SK-N-SH (cell line): ENCODE measurements at regions of chr2 and their contacts with region 1.

Region 1: GRCh38 chr2:196453613-196454047 is 185.9 kb upstream of the CCDC150 start:
- DNase-seq: peak; percentile 34
- H3K4me3 ChIP-seq: no peak overlapping the region
- H3K27ac ChIP-seq: no peak overlapping the region
- H3K4me1 ChIP-seq: no peaks in the 10 kb centered on the region
- H3K27me3 ChIP-seq: no peaks in the 10 kb centered on the region
- CTCF ChIP-seq: peak; percentile 70
- EP300 ChIP-seq: no peak
- RAD21 ChIP-seq: peak; percentile 78

Region 2: DNA sequence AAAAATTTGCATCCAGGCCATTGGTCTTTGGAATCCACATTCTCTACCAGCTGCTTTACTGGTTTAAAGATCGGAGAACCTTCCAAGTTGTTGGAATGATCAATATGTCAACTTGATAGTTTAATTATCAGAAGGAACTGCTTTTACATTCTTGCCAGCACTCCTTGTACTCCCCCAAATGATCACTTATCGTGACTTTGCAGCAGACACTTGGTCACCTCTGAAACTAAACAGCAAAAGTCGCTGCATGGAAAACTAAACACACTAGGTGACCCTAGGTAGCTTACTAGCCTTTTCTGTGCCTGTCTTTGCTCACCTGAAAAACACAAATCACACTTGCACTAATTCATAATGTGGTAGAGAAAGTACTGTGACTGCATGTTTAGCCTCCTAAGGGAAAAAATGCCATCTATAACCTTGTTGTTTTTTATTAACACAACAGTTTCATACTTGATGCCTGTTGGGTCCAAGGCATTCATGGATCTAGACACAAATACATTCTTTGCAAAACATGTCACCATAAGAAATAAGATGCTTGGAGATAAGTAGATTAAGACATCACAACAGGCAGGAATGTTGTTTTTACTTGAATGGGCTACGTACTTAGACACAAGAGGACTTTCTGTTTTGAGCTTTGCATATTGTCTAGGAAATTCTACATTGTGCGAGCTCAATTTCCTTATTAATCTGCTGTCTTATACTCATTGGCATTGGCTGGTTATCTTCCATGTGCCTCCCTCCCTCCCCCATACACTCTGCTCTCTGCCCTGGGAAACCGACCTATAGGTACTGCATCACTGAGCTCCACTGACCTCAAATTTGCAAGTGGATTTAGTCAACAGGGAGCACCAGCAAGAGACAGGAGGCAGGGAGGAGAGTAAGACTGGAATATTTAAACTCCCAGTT is 63.1 kb before region 1 on chr2:
- CTCF ChIA-PET with region 1: no interaction called
- POLR2A ChIA-PET with region 1: no interaction called
- DNase-seq: no peak
- H3K4me3 ChIP-seq: no peak overlapping the region
- H3K27ac ChIP-seq: peak overlapping the region in 1 of 2 experiments; percentile 15; a peak in 1 of 4 replicates
- H3K4me1 ChIP-seq: no peaks in the 10 kb centered on the region
- H3K27me3 ChIP-seq: no peaks in the 10 kb centered on the region
- CTCF ChIP-seq: no peak
- EP300 ChIP-seq: no peak
- RAD21 ChIP-seq: no peak

Region 3: GRCh38 chr2:196435189-196435588 is 18.4 kb before region 1 on chr2:
- CTCF ChIA-PET with region 1: interaction called, 12 read pairs
- POLR2A ChIA-PET with region 1: no interaction called
- DNase-seq: no peak
- H3K4me3 ChIP-seq: no peak overlapping the region
- H3K27ac ChIP-seq: no peak overlapping the region
- H3K4me1 ChIP-seq: peaks cover 0 to 4% of the 10 kb centered on the region in 2 experiments; a peak in 1 of 4 replicates
- H3K27me3 ChIP-seq: no peaks in the 10 kb centered on the region
- CTCF ChIP-seq: no peak
- EP300 ChIP-seq: no peak
- RAD21 ChIP-seq: no peak

Region 4: GRCh38 chr2:196464311-196464710 is 10.7 kb after region 1 on chr2:
- CTCF ChIA-PET with region 1: interaction called, 15 read pairs
- POLR2A ChIA-PET with region 1: no interaction called
- DNase-seq: no peak
- H3K4me3 ChIP-seq: no peak overlapping the region
- H3K27ac ChIP-seq: no peak overlapping the region
- H3K4me1 ChIP-seq: no peaks in the 10 kb centered on the region
- H3K27me3 ChIP-seq: no peaks in the 10 kb centered on the region
- CTCF ChIP-seq: no peak
- EP300 ChIP-seq: no peak
- RAD21 ChIP-seq: no peak

Region 5: DNA sequence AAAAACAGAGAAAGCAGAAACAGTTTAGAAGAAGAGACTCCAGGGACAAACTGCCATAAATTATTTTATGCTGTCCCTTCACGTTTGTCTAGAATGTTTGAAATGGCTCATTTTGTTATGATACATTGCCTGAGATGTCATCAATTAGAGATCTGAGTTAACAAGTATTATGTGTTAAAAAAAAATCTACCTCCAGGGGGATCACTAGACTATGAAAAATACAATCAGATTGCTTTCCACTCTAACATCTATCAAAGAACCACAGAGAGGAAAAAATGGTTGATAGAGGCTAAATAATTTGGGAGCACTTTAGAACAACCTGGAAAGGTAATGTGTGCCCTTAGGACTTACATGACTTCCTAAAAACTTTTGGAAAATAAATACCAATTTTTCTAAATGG is 82.1 kb after region 1 on chr2:
- CTCF ChIA-PET with region 1: no interaction called
- POLR2A ChIA-PET with region 1: no interaction called
- DNase-seq: no peak
- H3K4me3 ChIP-seq: no peak overlapping the region
- H3K27ac ChIP-seq: no peak overlapping the region
- H3K4me1 ChIP-seq: peaks cover 0 to 5% of the 10 kb centered on the region in 2 experiments; a peak in 2 of 4 replicates
- H3K27me3 ChIP-seq: no peaks in the 10 kb centered on the region
- CTCF ChIP-seq: peak; percentile 42
- EP300 ChIP-seq: no peak
- RAD21 ChIP-seq: peak; percentile 51

Region 6: GRCh38 chr2:196618661-196619060 is 165.0 kb after region 1 on chr2:
- CTCF ChIA-PET with region 1: no interaction called
- POLR2A ChIA-PET with region 1: no interaction called
- DNase-seq: no peak
- H3K4me3 ChIP-seq: no peak overlapping the region
- H3K27ac ChIP-seq: no peak overlapping the region
- H3K4me1 ChIP-seq: no peaks in the 10 kb centered on the region
- H3K27me3 ChIP-seq: no peaks in the 10 kb centered on the region
- CTCF ChIP-seq: no peak
- EP300 ChIP-seq: no peak
- RAD21 ChIP-seq: no peak